BJ (cell line): ENCODE measurements at regions of chr6 and their contacts with region 1.

Region 1: GRCh38 chr6:24980507-24981387 is 45.0 kb upstream of the RIPOR2 start:
- DNase-seq: no peak
- H3K4me3 ChIP-seq: no peak overlapping the region
- H3K27me3 ChIP-seq: no peaks in the 10 kb centered on the region
- CTCF ChIP-seq: no peak

Region 2: DNA sequence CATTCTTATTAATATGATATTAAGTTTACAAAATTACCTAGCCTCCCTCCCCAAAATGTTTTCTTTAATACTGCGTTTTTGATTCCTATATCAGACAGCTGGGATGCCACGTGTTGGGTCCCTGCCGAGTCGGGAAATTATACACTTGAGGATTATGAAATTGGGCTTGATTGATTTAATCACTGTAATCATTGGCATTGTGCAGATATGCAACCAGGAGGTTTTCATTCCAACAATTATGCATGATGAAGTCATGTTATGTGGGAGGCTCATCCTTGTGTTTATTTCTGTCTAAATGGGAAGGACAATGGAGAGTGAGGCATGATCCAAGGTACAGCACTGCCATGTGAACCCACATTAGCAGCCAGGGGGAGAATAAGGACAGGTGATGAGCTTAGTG is 14.4 kb before region 1 on chr6:
- CTCF ChIA-PET with region 1: no interaction called
- POLR2A ChIA-PET with region 1: interaction called, 29 read pairs
- DNase-seq: no peak
- H3K4me3 ChIP-seq: no peak overlapping the region
- H3K27me3 ChIP-seq: no peaks in the 10 kb centered on the region
- CTCF ChIP-seq: no peak

Region 3: GRCh38 chr6:25278261-25278913 is 297.6 kb after region 1 on chr6:
- CTCF ChIA-PET with region 1: no interaction called
- POLR2A ChIA-PET with region 1: no interaction called
- DNase-seq: no peak
- H3K4me3 ChIP-seq: peak overlapping the region; percentile 63
- H3K27me3 ChIP-seq: no peaks in the 10 kb centered on the region
- CTCF ChIP-seq: no peak